Activated CD8-positive, alpha-beta T cell treated with anti-CD3 and anti-CD28 coated beads, Interleukin-2, amount 10 ng/mL, durations not matched to agents 7 days and 5 days (primary cell): ENCODE measurements at regions of chr10 and their contacts with region 1.

Region 1: GRCh38 chr10:71771821-71772617 is 1.3 kb downstream of the VSIR start:
- DNase-seq: peak; percentile 58
- ATAC-seq: peak; percentile 7
- H3K4me3 Mint-ChIP-seq: peak overlapping the region; percentile 80
- H3K27ac Mint-ChIP-seq: peak overlapping the region; percentile 89
- H3K4me1 Mint-ChIP-seq: peaks cover 81% of the 10 kb centered on the region
- H3K27me3 Mint-ChIP-seq: no peaks in the 10 kb centered on the region

Region 2: GRCh38 chr10:71708301-71708703 is 63.7 kb before region 1 on chr10:
- CTCF ChIA-PET with region 1: interaction called, 50 read pairs
- POLR2A ChIA-PET with region 1: interaction called, 13 read pairs
- DNase-seq: peak; percentile 68
- ATAC-seq: peak; percentile 42
- H3K4me3 Mint-ChIP-seq: no peak overlapping the region
- H3K27ac Mint-ChIP-seq: peak overlapping the region; percentile 55
- H3K4me1 Mint-ChIP-seq: peaks cover 55% of the 10 kb centered on the region
- H3K27me3 Mint-ChIP-seq: no peaks in the 10 kb centered on the region

Region 3: GRCh38 chr10:71740069-71740468 is 31.9 kb before region 1 on chr10:
- CTCF ChIA-PET with region 1: interaction called, 32 read pairs
- POLR2A ChIA-PET with region 1: interaction called, 12 read pairs
- DNase-seq: no peak
- ATAC-seq: no peak
- H3K4me3 Mint-ChIP-seq: no peak overlapping the region
- H3K27ac Mint-ChIP-seq: peak overlapping the region; percentile 93
- H3K4me1 Mint-ChIP-seq: peaks cover 100% of the 10 kb centered on the region
- H3K27me3 Mint-ChIP-seq: no peaks in the 10 kb centered on the region

Region 4: DNA sequence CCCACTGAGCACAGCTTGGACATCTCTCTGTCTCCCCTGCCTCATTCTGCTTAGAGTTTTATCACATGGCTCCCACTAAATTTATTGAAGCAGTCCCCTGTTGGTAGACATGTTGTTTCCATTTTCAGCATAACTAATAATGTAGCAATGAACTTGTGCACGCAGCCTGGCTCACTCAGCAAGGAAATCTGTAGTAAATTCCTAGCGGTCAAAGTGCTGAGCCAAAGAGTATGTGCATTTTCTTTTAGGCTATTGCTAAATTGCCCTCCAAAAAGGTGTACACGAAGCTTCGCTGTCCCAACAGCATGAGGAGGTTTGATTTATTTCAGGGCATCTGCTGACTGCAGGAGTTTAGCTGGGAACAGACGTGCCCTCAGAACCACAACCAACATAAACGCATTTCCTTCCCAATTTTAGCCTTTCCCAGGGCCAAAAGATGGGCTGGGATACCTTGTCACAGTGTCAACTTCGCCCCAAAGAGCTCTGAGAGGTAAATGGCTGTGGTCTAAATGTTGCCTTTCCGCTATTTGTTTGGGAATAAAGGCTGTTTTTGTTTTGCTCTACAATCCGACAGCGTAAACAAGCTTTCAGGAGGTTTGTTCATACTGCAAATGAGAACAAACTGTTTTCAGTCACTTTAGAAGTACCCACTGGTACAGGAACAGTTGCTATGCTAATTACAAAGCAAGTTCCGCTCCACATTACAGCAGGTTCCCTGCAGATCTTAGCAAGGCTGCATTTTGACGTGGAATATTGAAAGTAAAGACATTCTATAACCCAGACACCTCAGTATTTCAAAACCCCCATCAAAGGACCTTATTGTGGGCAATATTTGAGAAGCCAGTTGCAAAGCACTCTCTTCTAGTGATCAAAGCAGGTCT is 15.5 kb before region 1 on chr10:
- CTCF ChIA-PET with region 1: interaction called, 62 read pairs
- POLR2A ChIA-PET with region 1: interaction called, 30 read pairs
- DNase-seq: no peak
- ATAC-seq: peak; percentile 53
- H3K4me3 Mint-ChIP-seq: peak overlapping the region; percentile 57
- H3K27ac Mint-ChIP-seq: peak overlapping the region; percentile 91
- H3K4me1 Mint-ChIP-seq: peaks cover 86% of the 10 kb centered on the region
- H3K27me3 Mint-ChIP-seq: no peaks in the 10 kb centered on the region

Region 5: GRCh38 chr10:71812016-71812912 is 40.2 kb after region 1 on chr10:
- CTCF ChIA-PET with region 1: interaction called, 17 read pairs
- POLR2A ChIA-PET with region 1: interaction called, 5 read pairs
- DNase-seq: peak; percentile 87
- ATAC-seq: peak; percentile 97
- H3K4me3 Mint-ChIP-seq: no peak overlapping the region
- H3K27ac Mint-ChIP-seq: peak overlapping the region; percentile 51
- H3K4me1 Mint-ChIP-seq: peaks cover 21% of the 10 kb centered on the region
- H3K27me3 Mint-ChIP-seq: no peaks in the 10 kb centered on the region

Region 6: DNA sequence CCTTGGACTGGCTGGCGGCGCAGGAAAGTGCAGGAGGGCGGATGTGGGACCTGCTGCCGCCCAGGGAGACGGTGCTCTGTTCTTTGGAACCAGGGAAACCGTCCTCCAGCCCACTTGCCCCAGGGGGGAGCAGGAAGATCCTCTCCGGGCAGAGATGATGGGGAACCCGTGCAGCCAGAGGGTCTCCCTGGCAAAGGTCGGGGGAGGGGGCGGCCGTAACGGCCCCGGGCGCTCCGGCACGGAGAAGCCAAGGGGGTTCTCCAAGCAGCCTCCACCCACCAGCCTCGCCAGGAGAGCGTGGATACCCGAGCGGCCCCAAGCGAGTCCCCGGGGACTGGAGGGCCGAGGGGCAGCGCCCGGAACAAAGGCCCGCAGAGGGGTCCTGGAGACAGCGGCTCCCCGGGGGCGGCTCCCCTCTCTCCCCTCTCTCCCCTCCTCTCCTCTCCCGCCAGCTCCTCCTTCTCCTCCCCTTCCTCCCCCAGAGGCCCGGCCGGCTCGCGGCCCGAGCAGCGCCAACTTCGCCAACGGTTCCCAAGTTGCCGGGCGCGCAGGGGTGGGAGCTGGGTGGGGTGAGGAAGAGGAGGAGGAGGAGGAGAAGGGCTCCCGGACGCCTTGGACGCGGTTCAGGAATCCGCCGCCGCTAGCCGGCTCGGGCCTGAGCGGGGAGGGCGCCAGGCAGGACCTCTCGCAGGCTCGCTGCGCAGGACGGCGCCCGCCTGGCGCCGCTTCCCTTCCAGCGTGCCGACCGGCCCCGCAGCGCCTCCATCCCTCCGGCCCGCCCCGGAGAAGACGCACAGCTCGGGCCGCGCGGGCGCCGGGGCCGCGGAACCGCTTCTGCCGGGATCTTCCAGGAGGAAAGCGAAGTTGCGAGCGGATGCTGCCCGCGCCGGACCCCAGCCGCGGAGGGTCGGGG is 192.0 kb after region 1 on chr10 and contains the start of gene CHST3:
- CTCF ChIA-PET with region 1: no interaction called
- POLR2A ChIA-PET with region 1: no interaction called
- DNase-seq: no peak
- ATAC-seq: peak; percentile 72
- H3K4me3 Mint-ChIP-seq: peak within 1 kb of the TSS; percentile 45
- H3K27ac Mint-ChIP-seq: no peak within 1 kb of the TSS
- H3K4me1 Mint-ChIP-seq: peaks cover 8% of the 10 kb centered on the region
- H3K27me3 Mint-ChIP-seq: peaks cover 52% of the 10 kb centered on the region
- total RNA-seq, gene CHST3: not detected

Region 7: DNA sequence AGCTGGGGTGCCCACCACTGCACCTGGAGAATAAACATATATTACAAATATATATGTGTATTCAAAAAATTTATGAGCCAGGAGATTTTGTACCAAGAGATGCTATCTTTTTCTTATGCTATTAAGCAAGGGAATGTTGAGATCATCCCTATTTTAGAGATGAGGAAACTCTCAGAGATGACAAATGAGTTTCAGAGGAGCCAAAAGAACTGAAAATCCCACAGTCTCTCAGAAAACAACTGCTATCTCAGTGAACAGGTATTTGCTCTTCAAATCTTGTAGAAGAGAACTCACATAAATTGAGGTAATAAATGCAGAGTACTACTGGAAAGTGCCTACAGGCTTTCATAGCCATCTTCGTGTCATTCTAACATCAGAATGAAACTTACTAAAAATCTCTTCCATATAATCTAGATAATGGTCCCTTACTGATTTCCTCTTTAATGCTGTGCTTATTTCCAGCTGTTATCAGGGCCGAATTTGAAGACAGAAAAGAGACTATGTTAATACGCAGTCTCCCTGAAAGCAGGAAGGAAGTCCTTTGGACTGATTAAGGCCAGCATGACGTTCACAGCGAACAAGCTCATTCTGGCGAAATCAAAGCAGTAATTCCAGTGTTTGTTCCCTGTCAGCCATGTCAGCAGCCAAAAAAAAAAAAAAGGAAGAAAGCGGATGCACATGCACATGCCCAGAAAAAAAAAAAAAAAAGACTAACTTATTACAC is 414.4 kb after region 1 on chr10:
- CTCF ChIA-PET with region 1: no interaction called
- POLR2A ChIA-PET with region 1: no interaction called
- DNase-seq: no peak
- ATAC-seq: no peak
- H3K4me3 Mint-ChIP-seq: no peak overlapping the region
- H3K27ac Mint-ChIP-seq: no peak overlapping the region
- H3K4me1 Mint-ChIP-seq: peaks cover 8% of the 10 kb centered on the region
- H3K27me3 Mint-ChIP-seq: no peaks in the 10 kb centered on the region